Heart right ventricle (tissue), 16 donors: ENCODE measurements at regions of chr5 and their contacts with region 1.

Region 1: GRCh38 chr5:167945542-167946384 is 345.7 kb upstream of the WWC1 start:
- DNase-seq: peak; percentile 44 to 53
- ATAC-seq: peak; percentile 69 to 87 (median 84)
- H3K4me3 ChIP-seq: no peak overlapping the region
- H3K27ac ChIP-seq: peak overlapping the region; percentile 57 to 92 (median 84)
- H3K4me1 ChIP-seq: peaks cover 8 to 86% (median 59%) of the 10 kb centered on the region in 9 donors
- H3K27me3 ChIP-seq: no peaks in the 10 kb centered on the region
- CTCF ChIP-seq: no peak

Region 2: DNA sequence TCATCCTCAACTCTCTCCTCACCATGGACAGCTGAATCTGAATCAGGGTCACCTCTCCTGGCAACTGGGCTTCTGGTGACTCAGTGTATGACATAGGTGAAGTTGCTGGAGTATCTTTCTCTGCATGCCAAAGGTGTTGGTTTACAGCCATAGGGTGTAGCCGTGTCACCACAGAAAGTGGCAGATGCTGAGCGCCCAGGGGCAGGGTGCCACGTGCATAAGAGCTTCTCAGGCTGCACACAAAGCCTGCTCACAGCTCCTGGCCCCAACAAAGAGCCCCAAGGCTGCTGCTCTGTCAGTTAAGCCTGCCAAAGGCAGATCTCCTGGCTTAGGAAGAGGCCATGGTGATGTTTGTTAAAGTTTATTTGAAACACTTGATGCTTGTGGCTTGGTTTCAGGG is 48.0 kb after region 1 on chr5:
- intact Hi-C with region 1: loop called in 2 of 10 experiments (anchors 2 to 5 kb)
- DNase-seq: no peak
- ATAC-seq: peak in 5 of 8 donors; percentile 10 to 60 (median 39)
- H3K4me3 ChIP-seq: no peak overlapping the region
- H3K27ac ChIP-seq: peak overlapping the region in 4 of 10 donors; percentile 10 to 43 (median 29)
- H3K4me1 ChIP-seq: peaks cover 0 to 29% (median 0%) of the 10 kb centered on the region in 9 donors
- H3K27me3 ChIP-seq: no peaks in the 10 kb centered on the region
- CTCF ChIP-seq: no peak

Region 3: DNA sequence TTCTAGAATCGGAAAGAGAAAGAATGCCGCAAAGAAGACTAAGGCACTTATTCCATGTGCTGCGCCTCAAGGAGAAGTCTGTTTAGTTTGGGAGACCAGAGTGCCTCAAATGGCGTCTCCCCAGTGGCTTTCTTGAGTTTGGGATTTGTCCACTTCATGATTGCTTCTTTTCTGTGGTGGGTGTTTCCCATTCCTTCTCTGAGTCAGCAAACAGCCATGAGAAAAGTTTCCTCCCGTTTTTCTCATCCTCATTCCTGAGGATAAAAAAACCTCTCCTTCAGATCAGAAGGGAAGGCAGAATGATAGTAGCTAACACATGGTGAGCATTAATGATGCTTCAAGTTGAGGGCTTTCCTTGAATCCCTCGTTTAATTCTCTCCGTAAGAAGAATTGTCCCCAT is 69.7 kb after region 1 on chr5:
- intact Hi-C with region 1: loop called in 1 of 10 experiments (anchors 10 kb)
- DNase-seq: no peak
- ATAC-seq: no peak
- H3K4me3 ChIP-seq: no peak overlapping the region
- H3K27ac ChIP-seq: no peak overlapping the region
- H3K4me1 ChIP-seq: peaks cover 0 to 60% (median 18%) of the 10 kb centered on the region in 9 donors
- H3K27me3 ChIP-seq: peaks cover 0 to 6% (median 0%) of the 10 kb centered on the region in 7 donors
- CTCF ChIP-seq: no peak

Region 4: DNA sequence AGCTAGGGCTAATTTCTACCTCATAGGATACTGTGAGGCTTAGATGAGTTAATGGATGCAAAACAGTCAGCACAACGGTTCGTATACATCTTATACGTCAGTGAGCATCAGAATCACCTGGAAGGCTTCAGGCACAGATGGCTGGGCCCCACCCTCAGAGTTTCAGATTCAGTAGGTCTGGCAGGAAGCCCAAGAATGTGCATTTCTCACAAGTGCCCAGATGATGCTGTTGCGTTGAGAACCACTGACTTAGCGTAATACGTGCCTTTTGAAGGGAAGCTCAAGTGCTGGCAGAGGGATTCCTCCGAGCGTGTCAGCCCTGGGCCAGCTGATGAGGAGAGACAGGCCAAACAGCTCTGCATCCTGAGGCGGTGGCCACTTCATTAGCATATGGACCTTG is 228.6 kb after region 1 on chr5:
- intact Hi-C with region 1: loop called in 1 of 10 experiments (anchors 10 kb)
- DNase-seq: no peak
- ATAC-seq: peak in 2 of 8 donors; percentile 7 to 35
- H3K4me3 ChIP-seq: no peak overlapping the region
- H3K27ac ChIP-seq: peak overlapping the region in 3 of 10 donors; percentile 28 to 84 (median 43)
- H3K4me1 ChIP-seq: peaks cover 5 to 74% (median 33%) of the 10 kb centered on the region in 9 donors
- H3K27me3 ChIP-seq: no peaks in the 10 kb centered on the region
- CTCF ChIP-seq: no peak